Psoas muscle (tissue), 8 donors: ENCODE measurements at regions of chr5 and their contacts with region 1.

Region 1: DNA sequence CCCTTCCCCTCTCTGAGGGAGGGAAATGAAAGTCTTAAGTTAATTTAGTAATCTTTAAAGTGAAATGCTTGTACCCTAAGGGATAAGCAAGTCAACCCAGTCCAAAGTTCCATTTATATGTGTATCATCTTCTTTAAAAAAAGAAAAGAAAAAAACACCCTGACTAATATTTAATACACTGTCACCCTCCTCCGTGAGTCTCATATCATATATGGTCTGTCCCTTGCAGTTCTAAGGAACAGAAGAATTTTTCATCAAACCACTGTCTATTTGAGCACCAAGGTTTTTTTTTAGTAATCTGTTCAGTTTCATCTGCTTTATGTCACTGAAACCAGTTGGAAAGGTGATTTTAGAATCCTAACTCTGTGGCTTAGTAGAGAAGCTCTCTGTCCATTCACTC is 15.2 kb downstream of the TNIP1 start:
- DNase-seq: no peak
- ATAC-seq: no peak
- H3K4me3 ChIP-seq: no peak overlapping the region
- H3K27ac ChIP-seq: peak overlapping the region; percentile 81
- H3K4me1 ChIP-seq: peaks cover 94% of the 10 kb centered on the region
- H3K27me3 ChIP-seq: no peaks in the 10 kb centered on the region
- CTCF ChIP-seq: no peak

Region 2: GRCh38 chr5:150895431-150896428 is 169.9 kb before region 1 on chr5:
- intact Hi-C with region 1: no loop called
- DNase-seq: no peak
- ATAC-seq: no peak
- H3K4me3 ChIP-seq: no peak overlapping the region
- H3K27ac ChIP-seq: no peak overlapping the region
- H3K4me1 ChIP-seq: no peaks in the 10 kb centered on the region
- H3K27me3 ChIP-seq: no peaks in the 10 kb centered on the region
- CTCF ChIP-seq: no peak

Region 3: GRCh38 chr5:151020304-151021110 is 45.1 kb before region 1 on chr5 and contains the start of gene GPX3:
- intact Hi-C with region 1: no loop called
- DNase-seq: peak; percentile 96 to 98
- ATAC-seq: peak; percentile 76 to 84 (median 77)
- H3K4me3 ChIP-seq: peak within 1 kb of the TSS; percentile 98
- H3K27ac ChIP-seq: peak within 1 kb of the TSS; percentile 96
- H3K4me1 ChIP-seq: peaks cover 50% of the 10 kb centered on the region
- H3K27me3 ChIP-seq: no peaks in the 10 kb centered on the region
- CTCF ChIP-seq: no peak
- total RNA-seq, gene GPX3: 447 to 852 (median 690) TPM

Region 4: GRCh38 chr5:151078490-151079262 is 13.1 kb after region 1 on chr5:
- intact Hi-C with region 1: loop called in 1 of 2 experiments (anchors 2 kb)
- DNase-seq: peak; percentile 11 to 54
- ATAC-seq: no peak
- H3K4me3 ChIP-seq: peak overlapping the region; percentile 98
- H3K27ac ChIP-seq: peak overlapping the region; percentile 99
- H3K4me1 ChIP-seq: peaks cover 80% of the 10 kb centered on the region
- H3K27me3 ChIP-seq: no peaks in the 10 kb centered on the region
- CTCF ChIP-seq: no peak

Region 5: DNA sequence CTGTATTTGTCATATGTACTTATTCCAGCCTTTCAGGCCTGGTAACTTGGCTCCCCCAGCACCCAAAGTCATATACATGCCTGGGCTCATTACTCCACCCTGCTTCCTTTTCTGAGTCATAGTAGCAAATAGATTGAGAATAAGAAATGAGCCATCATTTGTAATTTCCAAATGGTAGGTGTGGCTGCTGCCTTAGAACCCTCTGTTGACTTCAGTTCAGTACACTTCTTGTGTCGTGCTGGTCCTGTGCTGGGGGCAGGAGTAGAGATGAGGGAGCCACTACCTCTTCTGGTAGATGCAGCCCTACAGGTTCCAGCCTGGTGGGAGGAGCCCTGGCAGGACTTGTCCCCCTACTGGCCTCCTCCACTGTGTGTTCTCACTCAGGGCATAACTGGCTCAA is 198.5 kb after region 1 on chr5:
- intact Hi-C with region 1: no loop called
- DNase-seq: no peak
- ATAC-seq: peak in 2 of 4 donors; percentile 40 to 49
- H3K4me3 ChIP-seq: no peak overlapping the region
- H3K27ac ChIP-seq: no peak overlapping the region
- H3K4me1 ChIP-seq: peaks cover 7% of the 10 kb centered on the region
- H3K27me3 ChIP-seq: no peaks in the 10 kb centered on the region
- CTCF ChIP-seq: no peak